ENCODE measurements at regions of chr2 and their contacts with region 1.

Region 1: DNA sequence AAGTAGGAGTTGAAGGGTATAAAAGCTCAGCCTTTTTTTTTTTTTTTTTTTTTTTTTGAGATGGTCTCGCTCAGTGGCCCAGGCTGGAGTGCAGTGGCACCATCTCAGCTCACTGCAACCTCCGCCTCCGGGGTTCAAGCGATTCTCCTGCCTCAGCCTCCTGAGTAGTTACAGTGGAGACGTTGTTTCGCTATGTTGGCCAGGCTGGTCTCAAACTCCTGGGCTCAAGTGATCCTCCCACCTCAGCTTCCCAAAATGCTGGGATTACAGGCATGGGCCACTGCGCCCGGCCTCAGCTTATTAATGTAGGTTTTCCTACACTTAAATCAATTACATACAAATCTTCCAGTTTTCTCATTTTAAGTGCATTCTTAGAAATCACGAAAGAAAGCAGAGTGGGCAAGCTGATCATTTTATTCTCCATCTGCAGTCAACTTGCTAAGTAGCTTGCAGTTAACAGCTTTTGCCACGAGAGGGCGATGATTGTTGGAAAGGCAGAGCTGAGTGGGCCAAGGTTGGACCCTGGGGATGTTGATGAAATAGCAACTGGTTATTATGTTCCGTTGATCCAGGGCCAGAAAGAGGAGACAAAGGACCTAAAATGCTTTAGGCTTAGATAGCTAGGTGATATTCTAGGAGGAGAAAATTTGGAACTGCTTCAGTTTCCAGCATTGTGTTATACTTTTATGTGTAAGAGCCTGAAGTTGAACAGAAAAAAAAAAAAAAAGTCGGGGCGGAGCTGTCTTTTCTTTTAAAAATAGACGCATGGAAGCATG is 234.4 kb upstream of the EPAS1 start:
- DNase-seq: peak; percentile 91
- H3K4me3 ChIP-seq: no peak overlapping the region
- H3K27ac ChIP-seq: peak overlapping the region; percentile 10
- H3K4me1 ChIP-seq: peaks cover 38% of the 10 kb centered on the region
- H3K27me3 ChIP-seq: no peaks in the 10 kb centered on the region
- CTCF ChIP-seq: peak; percentile 83 to 93
- POLR2A ChIP-seq: no peak

Region 2: DNA sequence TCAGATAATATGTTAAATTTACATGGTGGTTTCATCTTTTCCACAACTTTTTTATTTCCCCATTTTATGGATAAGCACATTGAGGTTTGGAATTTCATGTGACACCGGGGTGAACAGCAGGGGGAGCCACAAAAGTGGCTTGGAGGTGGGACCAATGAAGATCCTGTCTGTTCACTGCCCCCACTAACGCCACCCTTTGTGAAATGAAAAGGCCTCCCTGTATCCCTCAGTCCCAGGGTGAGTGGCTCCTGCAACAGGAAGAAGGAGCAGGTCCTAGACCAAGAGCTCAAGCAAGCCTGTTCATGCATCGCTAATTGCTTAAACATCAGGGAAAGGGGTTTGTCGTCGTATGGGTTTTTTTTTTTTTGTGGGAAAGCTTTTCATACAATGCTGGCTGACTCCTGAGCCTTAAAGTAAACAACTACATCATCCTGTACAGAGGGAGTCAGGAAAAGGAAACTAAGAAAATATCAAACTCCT is 33.5 kb before region 1 on chr2:
- CTCF ChIA-PET with region 1: interaction called, 20 read pairs
- POLR2A ChIA-PET with region 1: no interaction called
- dilution Hi-C with region 1: no loop called
- intact Hi-C with region 1: loop called (anchors 1 kb)
- DNase-seq: peak; percentile 96
- H3K4me3 ChIP-seq: no peak overlapping the region
- H3K27ac ChIP-seq: peak overlapping the region; percentile 77
- H3K4me1 ChIP-seq: peaks cover 20% of the 10 kb centered on the region
- H3K27me3 ChIP-seq: no peaks in the 10 kb centered on the region
- CTCF ChIP-seq: peak; percentile 32 to 47
- POLR2A ChIP-seq: no peak

Region 3: DNA sequence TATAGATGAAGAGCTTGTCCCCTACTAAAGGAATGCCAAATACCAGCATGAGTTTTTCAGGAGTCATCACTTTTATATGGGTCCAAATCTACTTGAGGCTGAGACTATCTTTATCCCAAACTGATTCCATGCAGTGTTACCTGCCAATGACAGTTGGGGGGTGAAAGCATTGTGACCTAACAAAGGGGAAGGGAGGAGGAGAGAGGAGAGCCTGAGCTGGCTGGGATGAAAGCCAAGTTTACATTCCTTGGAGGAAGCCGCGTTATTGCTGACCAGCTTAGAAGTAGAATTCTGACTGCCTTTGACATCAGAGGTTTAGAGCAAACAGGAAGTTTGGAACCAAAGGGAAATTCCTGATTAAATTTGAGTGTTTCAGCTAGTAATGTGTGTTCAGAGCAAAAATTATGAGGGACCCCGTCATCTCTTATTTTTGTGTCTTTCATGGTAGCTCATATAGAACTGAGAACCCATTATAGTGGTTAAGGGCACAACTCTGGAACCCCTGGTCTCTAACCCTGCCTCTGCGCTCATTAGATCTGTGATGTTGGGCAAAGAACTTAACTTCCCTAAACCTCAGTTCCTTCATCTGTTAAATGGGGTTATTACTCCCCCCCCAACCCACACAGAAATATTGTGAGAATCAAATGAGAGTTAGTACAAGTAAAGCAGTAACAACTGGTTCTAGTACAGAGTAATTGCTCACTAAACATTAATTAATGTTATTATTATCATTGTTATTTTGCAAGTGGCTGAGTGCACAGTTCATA is 35.1 kb after region 1 on chr2:
- CTCF ChIA-PET with region 1: interaction called, 33 read pairs
- POLR2A ChIA-PET with region 1: interaction called, 3 read pairs
- dilution Hi-C with region 1: no loop called
- intact Hi-C with region 1: loop called (anchors 1 kb)
- DNase-seq: peak; percentile 96
- H3K4me3 ChIP-seq: no peak overlapping the region
- H3K27ac ChIP-seq: peak overlapping the region; percentile 95
- H3K4me1 ChIP-seq: peaks cover 17% of the 10 kb centered on the region
- H3K27me3 ChIP-seq: no peaks in the 10 kb centered on the region
- CTCF ChIP-seq: no peak
- POLR2A ChIP-seq: no peak

Region 4: GRCh38 chr2:46179037-46179652 is 116.3 kb after region 1 on chr2:
- CTCF ChIA-PET with region 1: interaction called, 8 read pairs
- POLR2A ChIA-PET with region 1: no interaction called
- dilution Hi-C with region 1: no loop called
- intact Hi-C with region 1: loop called (anchors 2 kb)
- DNase-seq: peak; percentile 88
- H3K4me3 ChIP-seq: no peak overlapping the region
- H3K27ac ChIP-seq: peak overlapping the region; percentile 84
- H3K4me1 ChIP-seq: peaks cover 13% of the 10 kb centered on the region
- H3K27me3 ChIP-seq: no peaks in the 10 kb centered on the region
- CTCF ChIP-seq: no peak
- POLR2A ChIP-seq: no peak

Region 5: DNA sequence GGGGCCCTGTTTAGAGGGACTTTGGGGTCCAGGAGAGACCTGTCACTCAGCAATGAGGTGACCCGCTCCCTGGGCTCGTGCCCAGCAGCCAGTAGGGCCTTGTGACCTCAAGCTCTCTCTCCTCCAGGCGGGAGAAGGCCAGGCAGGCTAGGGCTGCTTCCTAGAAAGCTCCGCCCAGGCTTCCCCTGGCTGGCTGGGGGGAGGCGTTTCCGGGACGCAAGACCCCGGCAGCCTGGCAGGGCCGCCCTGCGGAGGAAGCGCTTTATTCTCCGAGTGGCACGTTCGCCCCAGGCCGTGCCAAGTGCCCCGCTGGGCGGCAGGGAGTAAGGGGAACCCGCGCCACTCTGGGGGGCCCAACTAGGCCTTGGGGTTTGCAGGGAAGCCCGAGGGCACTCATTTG is 213.1 kb after region 1 on chr2:
- CTCF ChIA-PET with region 1: interaction called, 21 read pairs
- POLR2A ChIA-PET with region 1: no interaction called
- dilution Hi-C with region 1: no loop called
- intact Hi-C with region 1: loop called (anchors 1 kb)
- DNase-seq: peak; percentile 89
- H3K4me3 ChIP-seq: no peak overlapping the region
- H3K27ac ChIP-seq: peak overlapping the region; percentile 96
- H3K4me1 ChIP-seq: peaks cover 74% of the 10 kb centered on the region
- H3K27me3 ChIP-seq: no peaks in the 10 kb centered on the region
- CTCF ChIP-seq: no peak
- POLR2A ChIP-seq: no peak

Region 6: DNA sequence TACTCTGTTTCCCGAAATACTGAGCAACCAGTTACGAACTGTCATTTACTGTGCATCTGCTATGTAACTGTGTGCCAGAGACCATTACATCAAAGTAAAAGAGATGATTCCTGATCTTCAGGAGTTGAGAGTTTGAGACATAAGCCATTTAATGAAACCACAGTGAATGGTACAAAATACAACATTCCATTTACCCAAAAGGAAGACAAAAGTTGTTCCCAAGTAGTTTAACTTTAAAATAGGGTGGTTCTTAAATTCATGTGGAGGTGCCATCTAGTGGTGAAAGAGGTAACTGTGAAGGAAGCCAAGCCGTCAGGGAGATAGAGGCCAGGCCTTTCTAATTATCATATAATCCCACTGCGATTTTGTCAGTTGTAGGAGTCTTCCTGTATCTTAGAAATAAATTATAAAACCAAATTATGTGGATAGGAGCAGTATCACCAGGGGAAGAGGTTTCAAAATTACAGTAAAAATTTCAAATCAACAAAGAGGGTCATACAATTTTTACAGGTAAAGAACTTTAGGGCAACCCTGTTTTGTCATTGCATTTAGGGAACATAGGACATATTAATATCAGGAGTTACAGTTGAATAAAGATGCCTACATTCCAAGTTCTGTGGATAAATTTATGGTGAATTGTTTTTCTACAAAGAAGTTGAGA is 302.1 kb after region 1 on chr2:
- CTCF ChIA-PET with region 1: interaction called, 31 read pairs
- POLR2A ChIA-PET with region 1: no interaction called
- dilution Hi-C with region 1: no loop called
- intact Hi-C with region 1: loop called (anchors 1 kb)
- DNase-seq: peak; percentile 70
- H3K4me3 ChIP-seq: no peak overlapping the region
- H3K27ac ChIP-seq: no peak overlapping the region
- H3K4me1 ChIP-seq: peaks cover 24% of the 10 kb centered on the region
- H3K27me3 ChIP-seq: no peaks in the 10 kb centered on the region
- CTCF ChIP-seq: peak; percentile 61 to 63
- POLR2A ChIP-seq: no peak

Measured in endothelial cell of umbilical vein (primary cell).